Panc1 (cell line): ENCODE measurements at regions of chr20 and their contacts with region 1.

Region 1: GRCh38 chr20:31605031-31605901 is at the start of gene ID1:
- DNase-seq: peak; percentile 95
- ATAC-seq: peak; percentile 67
- H3K4me3 ChIP-seq: peak within 1 kb of the TSS; percentile 73 to 88
- H3K27ac ChIP-seq: peak within 1 kb of the TSS; percentile 100
- H3K4me1 ChIP-seq: peaks cover 58% of the 10 kb centered on the region
- H3K27me3 ChIP-seq: no peaks in the 10 kb centered on the region
- CTCF ChIP-seq: no peak
- total RNA-seq, gene ID1: 152 TPM

Region 2: GRCh38 chr20:31390490-31390889 is 214.8 kb before region 1 on chr20 and contains the start of gene DEFB119:
- CTCF ChIA-PET with region 1: no interaction called
- POLR2A ChIA-PET with region 1: no interaction called
- in situ Hi-C with region 1: no loop called
- intact Hi-C with region 1: no loop called
- DNase-seq: no peak
- ATAC-seq: no peak
- H3K4me3 ChIP-seq: no peak within 1 kb of the TSS
- H3K27ac ChIP-seq: no peak within 1 kb of the TSS
- H3K4me1 ChIP-seq: no peaks in the 10 kb centered on the region
- H3K27me3 ChIP-seq: peaks cover 15% of the 10 kb centered on the region
- CTCF ChIP-seq: no peak
- total RNA-seq, gene DEFB119: not detected

Region 3: DNA sequence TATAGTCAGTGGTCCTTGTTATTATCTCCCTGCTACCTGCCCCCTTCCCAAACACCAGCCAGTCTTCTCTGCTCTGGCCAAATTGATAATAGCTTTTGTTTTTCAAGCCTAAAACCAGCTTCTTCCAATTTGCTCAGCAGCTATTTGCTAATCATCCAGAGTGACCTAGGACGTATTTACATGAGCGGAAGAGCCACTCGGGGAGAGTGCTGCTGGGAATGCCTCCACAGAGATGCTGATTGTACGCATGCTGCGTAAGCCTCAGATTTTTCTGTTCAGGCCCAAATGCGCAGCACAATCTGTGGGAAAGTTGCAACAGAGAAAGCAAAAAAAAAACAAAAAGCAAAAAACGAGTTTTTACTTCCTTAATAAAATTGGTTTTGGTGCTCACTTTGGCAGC is 24.6 kb before region 1 on chr20:
- CTCF ChIA-PET with region 1: interaction called, 8 read pairs
- POLR2A ChIA-PET with region 1: interaction called, 14 read pairs
- in situ Hi-C with region 1: no loop called
- intact Hi-C with region 1: no loop called
- DNase-seq: no peak
- ATAC-seq: no peak
- H3K4me3 ChIP-seq: no peak overlapping the region
- H3K27ac ChIP-seq: no peak overlapping the region
- H3K4me1 ChIP-seq: peaks cover 9% of the 10 kb centered on the region
- H3K27me3 ChIP-seq: no peaks in the 10 kb centered on the region
- CTCF ChIP-seq: no peak

Region 4: GRCh38 chr20:31587545-31588389 is 17.5 kb before region 1 on chr20:
- CTCF ChIA-PET with region 1: interaction called, 7 read pairs
- POLR2A ChIA-PET with region 1: interaction called, 20 read pairs
- in situ Hi-C with region 1: no loop called
- intact Hi-C with region 1: no loop called
- DNase-seq: no peak
- ATAC-seq: peak; percentile 83
- H3K4me3 ChIP-seq: peak overlapping the region; percentile 38 to 54
- H3K27ac ChIP-seq: peak overlapping the region; percentile 82
- H3K4me1 ChIP-seq: peaks cover 36% of the 10 kb centered on the region
- H3K27me3 ChIP-seq: no peaks in the 10 kb centered on the region
- CTCF ChIP-seq: no peak

Region 5: GRCh38 chr20:31698803-31699718 is 93.8 kb after region 1 on chr20:
- CTCF ChIA-PET with region 1: interaction called, 10 read pairs
- POLR2A ChIA-PET with region 1: no interaction called
- in situ Hi-C with region 1: no loop called
- intact Hi-C with region 1: no loop called
- DNase-seq: peak; percentile 99
- ATAC-seq: peak; percentile 43
- H3K4me3 ChIP-seq: no peak overlapping the region
- H3K27ac ChIP-seq: peak overlapping the region; percentile 71
- H3K4me1 ChIP-seq: peaks cover 40% of the 10 kb centered on the region
- H3K27me3 ChIP-seq: no peaks in the 10 kb centered on the region
- CTCF ChIP-seq: no peak

Region 6: GRCh38 chr20:31731321-31731717 is 126.1 kb after region 1 on chr20:
- CTCF ChIA-PET with region 1: no interaction called
- POLR2A ChIA-PET with region 1: no interaction called
- in situ Hi-C with region 1: no loop called
- intact Hi-C with region 1: no loop called
- DNase-seq: no peak
- ATAC-seq: no peak
- H3K4me3 ChIP-seq: no peak overlapping the region
- H3K27ac ChIP-seq: no peak overlapping the region
- H3K4me1 ChIP-seq: no peaks in the 10 kb centered on the region
- H3K27me3 ChIP-seq: no peaks in the 10 kb centered on the region
- CTCF ChIP-seq: no peak